MCF 10A (cell line): ENCODE measurements at regions of chr5 and their contacts with region 1.

Region 1: DNA sequence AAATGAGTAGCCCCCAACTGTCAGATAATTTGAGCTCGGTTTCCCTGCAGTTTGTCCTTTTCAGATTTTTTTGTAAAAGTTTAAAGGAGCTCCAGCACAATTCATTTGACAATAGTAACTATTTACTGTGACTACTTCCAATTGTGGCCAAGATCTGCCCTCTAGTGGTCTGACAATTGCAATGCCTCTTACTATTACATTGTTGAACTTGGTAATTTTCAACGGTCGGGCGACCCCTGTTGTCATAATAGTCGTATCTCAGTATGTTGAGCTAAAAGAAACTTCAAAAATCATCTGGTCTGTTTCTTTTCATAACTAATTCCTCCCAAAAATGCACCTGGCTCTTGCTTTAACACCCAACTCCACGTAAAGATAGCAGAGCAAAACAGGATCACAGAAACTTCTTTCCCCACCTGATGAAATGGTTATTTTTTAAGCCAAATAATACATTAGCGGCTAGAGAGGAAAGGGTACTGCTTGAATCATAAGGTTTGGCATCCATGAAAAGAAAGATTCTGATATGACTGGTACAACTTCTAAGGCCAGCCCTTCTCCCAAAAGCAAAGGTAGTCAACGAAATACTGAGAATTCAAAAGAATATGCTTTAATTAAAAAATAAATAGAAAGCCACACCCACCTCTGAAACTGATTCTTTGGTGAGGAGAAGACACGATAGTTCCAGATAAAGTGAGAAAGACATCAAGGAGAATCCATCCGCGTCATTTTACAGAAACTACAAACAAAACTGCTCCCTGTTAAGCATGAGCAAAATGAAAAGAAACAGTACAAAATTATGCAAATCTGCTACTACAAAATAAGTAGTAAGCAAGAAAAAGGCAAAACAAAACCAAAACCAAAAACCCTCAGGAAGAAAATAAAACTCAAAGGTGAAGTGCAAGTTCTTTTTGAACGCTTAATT is 76.9 kb upstream of the HTR4 start:
- DNase-seq: peak; percentile 95
- H3K4me3 Mint-ChIP-seq: no peak overlapping the region
- H3K27ac Mint-ChIP-seq: peak overlapping the region; percentile 62
- H3K4me1 Mint-ChIP-seq: peaks cover 52% of the 10 kb centered on the region
- H3K27me3 Mint-ChIP-seq: no peaks in the 10 kb centered on the region
- CTCF ChIP-seq: peak; percentile 99

Region 2: GRCh38 chr5:148179234-148179824 is 551.9 kb before region 1 on chr5:
- CTCF ChIA-PET with region 1: interaction called, 33 read pairs
- POLR2A ChIA-PET with region 1: no interaction called
- intact Hi-C with region 1: loop called (anchors 1 kb)
- DNase-seq: peak; percentile 84
- H3K4me3 Mint-ChIP-seq: no peak overlapping the region
- H3K27ac Mint-ChIP-seq: no peak overlapping the region
- H3K4me1 Mint-ChIP-seq: no peaks in the 10 kb centered on the region
- H3K27me3 Mint-ChIP-seq: peaks cover 7% of the 10 kb centered on the region
- CTCF ChIP-seq: peak; percentile 94

Region 3: GRCh38 chr5:148408092-148408491 is 323.1 kb before region 1 on chr5:
- CTCF ChIA-PET with region 1: interaction called, 21 read pairs
- POLR2A ChIA-PET with region 1: no interaction called
- intact Hi-C with region 1: no loop called
- DNase-seq: no peak
- H3K4me3 Mint-ChIP-seq: no peak overlapping the region
- H3K27ac Mint-ChIP-seq: no peak overlapping the region
- H3K4me1 Mint-ChIP-seq: peaks cover 9% of the 10 kb centered on the region
- H3K27me3 Mint-ChIP-seq: no peaks in the 10 kb centered on the region
- CTCF ChIP-seq: no peak

Region 4: GRCh38 chr5:148469501-148469935 is 261.7 kb before region 1 on chr5:
- CTCF ChIA-PET with region 1: interaction called, 17 read pairs
- POLR2A ChIA-PET with region 1: no interaction called
- intact Hi-C with region 1: no loop called
- DNase-seq: peak; percentile 75
- H3K4me3 Mint-ChIP-seq: no peak overlapping the region
- H3K27ac Mint-ChIP-seq: no peak overlapping the region
- H3K4me1 Mint-ChIP-seq: peaks cover 10% of the 10 kb centered on the region
- H3K27me3 Mint-ChIP-seq: no peaks in the 10 kb centered on the region
- CTCF ChIP-seq: no peak

Region 5: DNA sequence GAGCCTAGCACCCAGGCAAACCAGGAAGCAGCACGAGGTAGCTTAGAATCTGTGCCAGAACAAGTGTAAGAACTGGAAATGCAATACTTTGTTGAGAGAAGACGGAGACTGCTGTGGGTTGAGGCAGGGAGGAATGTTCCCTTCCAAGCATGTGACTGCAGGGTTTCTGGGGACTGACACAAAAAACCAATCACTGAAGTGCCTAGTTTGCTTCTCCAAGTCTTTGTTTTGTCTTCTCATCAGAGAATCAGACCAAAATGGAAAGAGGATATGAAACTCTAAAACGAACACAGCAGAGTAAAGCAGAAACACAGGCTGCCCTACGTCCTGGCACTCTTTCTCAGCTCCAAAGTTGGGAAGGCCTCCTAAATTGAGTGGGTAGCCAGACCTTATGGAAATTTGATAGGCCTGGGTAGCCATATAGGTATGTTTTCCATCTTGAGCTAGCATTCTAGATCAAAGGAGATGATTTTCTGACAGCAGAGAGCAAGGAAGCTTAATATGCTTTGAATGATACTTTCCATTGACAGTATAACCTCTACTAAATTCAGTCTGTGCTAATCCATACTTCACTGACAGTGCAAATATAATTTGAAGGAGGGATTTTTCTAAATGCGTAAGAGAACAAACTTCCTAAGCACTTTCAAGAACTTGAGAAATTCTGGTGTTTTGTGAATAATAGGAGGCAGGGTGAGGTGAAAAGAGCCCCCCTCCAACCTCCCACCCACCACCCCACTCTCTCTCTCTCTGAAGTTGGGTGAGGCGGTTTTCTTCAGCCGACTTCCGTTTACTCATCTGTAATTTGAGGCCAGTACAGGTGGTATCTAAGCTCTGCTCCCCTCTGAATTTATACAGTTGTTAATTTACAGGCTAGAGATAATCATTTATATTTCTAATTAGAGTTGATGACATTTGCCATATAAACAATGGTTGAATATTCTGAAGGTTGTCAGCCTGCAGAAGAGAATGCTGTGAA is 100.7 kb after region 1 on chr5:
- CTCF ChIA-PET with region 1: interaction called, 65 read pairs
- POLR2A ChIA-PET with region 1: interaction called, 8 read pairs
- intact Hi-C with region 1: no loop called
- DNase-seq: no peak
- H3K4me3 Mint-ChIP-seq: peak overlapping the region; percentile 90
- H3K27ac Mint-ChIP-seq: peak overlapping the region; percentile 69
- H3K4me1 Mint-ChIP-seq: peaks cover 87% of the 10 kb centered on the region
- H3K27me3 Mint-ChIP-seq: no peaks in the 10 kb centered on the region
- CTCF ChIP-seq: no peak

Region 6: DNA sequence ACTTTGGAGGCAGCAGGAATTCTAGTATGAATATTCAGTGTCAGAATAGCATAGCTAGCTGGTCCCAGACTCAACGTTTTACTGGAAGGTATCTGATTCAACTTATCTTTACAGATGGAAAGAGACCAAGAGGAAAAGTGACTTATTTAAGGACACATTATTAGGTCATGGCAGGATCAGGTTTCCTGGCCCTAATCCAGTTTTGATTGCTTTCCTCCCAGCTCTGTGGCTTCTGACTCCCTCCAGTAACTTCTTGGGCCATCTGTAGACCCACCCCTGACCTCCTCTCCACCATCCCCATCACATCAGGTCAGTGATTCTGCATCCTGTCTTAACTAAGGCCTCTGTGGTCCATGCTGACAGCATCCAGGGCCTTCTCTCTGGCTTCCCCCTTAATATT is 293.3 kb after region 1 on chr5:
- CTCF ChIA-PET with region 1: interaction called, 882 read pairs
- POLR2A ChIA-PET with region 1: no interaction called
- intact Hi-C with region 1: no loop called
- DNase-seq: peak; percentile 39
- H3K4me3 Mint-ChIP-seq: no peak overlapping the region
- H3K27ac Mint-ChIP-seq: no peak overlapping the region
- H3K4me1 Mint-ChIP-seq: peaks cover 16% of the 10 kb centered on the region
- H3K27me3 Mint-ChIP-seq: no peaks in the 10 kb centered on the region
- CTCF ChIP-seq: no peak

Region 7: DNA sequence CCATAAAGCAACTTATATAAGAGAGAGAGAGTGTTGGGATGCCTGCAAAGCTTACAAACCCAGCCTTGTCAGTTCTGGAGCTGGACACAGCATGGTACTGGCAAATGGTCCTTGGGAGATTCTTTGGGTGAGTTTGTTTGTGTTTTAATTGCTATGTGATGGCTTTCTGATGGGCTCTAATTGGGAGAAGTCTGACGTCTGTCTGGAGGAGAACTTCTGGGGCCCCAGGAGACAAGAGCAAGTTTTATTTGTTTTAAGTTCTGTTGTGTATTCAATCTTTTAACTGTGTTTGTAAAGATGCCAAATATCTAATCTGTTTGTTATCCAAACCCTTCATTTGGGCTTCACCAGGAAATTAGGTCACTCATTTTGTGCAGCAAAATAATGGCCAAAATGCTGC is 490.1 kb after region 1 on chr5:
- CTCF ChIA-PET with region 1: interaction called, 13 read pairs
- POLR2A ChIA-PET with region 1: interaction called, 3 read pairs
- intact Hi-C with region 1: no loop called
- DNase-seq: no peak
- H3K4me3 Mint-ChIP-seq: no peak overlapping the region
- H3K27ac Mint-ChIP-seq: peak overlapping the region; percentile 74
- H3K4me1 Mint-ChIP-seq: no peaks in the 10 kb centered on the region
- H3K27me3 Mint-ChIP-seq: no peaks in the 10 kb centered on the region
- CTCF ChIP-seq: no peak